ENCODE measurements at regions of chrX and their contacts with region 1.

Region 1: GRCh38 chrX:27599928-27600327 is 9.8 kb downstream of the DCAF8L2 start:
- DNase-seq: no peak
- H3K4me3 Mint-ChIP-seq: peak overlapping the region; percentile 36
- H3K27ac Mint-ChIP-seq: peak overlapping the region; percentile 98
- H3K4me1 Mint-ChIP-seq: peaks cover 28% of the 10 kb centered on the region
- H3K27me3 Mint-ChIP-seq: no peaks in the 10 kb centered on the region
- CTCF ChIP-seq: no peak

Region 2: DNA sequence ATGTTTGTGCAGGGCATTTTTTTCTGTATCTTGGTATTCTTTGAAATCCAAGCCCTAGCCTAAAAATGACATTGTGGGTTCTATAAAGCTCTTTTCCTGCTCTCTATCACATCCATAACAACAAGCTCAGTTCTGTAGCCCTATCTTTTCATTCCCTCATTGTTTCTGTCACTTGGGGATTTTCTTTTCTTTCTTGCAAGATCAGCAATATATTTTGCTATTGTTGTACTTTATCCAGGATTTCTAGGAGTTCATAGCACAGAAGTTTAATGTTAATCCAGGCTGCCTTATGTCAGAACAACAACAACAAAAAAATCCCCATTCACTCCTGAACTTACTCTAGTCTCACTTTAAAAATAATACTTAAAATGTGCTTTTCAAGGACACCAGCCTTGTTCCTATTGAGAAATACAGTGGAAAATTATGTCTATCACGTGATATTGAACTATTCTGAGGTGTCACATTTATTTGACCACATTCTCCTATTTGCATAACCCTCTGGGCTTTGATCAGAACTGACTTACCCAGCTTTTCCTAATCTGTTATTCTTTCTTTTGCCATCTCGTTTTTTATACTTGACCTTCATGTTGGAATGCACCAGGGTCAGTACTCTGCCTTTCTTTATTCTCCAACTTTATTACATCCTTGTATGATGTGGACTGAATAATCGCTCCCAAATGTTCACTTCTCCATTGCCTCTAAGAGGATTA is 1271.2 kb before region 1 on chrX:
- CTCF ChIA-PET with region 1: no interaction called
- intact Hi-C with region 1: no loop called
- DNase-seq: no peak
- H3K4me3 Mint-ChIP-seq: no peak overlapping the region
- H3K27ac Mint-ChIP-seq: no peak overlapping the region
- H3K4me1 Mint-ChIP-seq: no peaks in the 10 kb centered on the region
- H3K27me3 Mint-ChIP-seq: no peaks in the 10 kb centered on the region
- CTCF ChIP-seq: no peak

Region 3: DNA sequence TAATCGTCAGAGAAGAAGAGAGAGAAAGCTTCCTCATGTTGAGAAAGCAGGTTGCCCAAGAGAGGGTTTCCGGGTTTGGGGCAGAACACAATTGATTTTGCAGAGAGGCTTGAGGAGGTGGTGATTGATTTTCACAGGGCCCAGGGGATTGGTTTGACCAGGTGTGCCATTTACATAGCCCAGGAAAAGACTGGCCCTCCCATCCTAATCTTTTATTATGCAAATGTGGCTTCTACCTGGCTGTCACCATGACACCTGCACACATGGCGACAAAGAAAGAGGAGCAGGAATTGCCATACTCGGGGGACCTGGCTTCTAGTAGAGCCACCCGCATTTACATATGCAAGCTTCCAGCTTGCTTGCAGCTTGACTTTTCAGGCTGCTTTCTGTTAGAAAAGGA is 542.0 kb before region 1 on chrX:
- CTCF ChIA-PET with region 1: no interaction called
- intact Hi-C with region 1: no loop called
- DNase-seq: no peak
- H3K4me3 Mint-ChIP-seq: no peak overlapping the region
- H3K27ac Mint-ChIP-seq: no peak overlapping the region
- H3K4me1 Mint-ChIP-seq: no peaks in the 10 kb centered on the region
- H3K27me3 Mint-ChIP-seq: no peaks in the 10 kb centered on the region
- CTCF ChIP-seq: no peak

Region 4: GRCh38 chrX:27445438-27445837 is 154.5 kb before region 1 on chrX:
- CTCF ChIA-PET with region 1: no interaction called
- intact Hi-C with region 1: loop called (anchors 5 kb)
- DNase-seq: peak; percentile 53
- H3K4me3 Mint-ChIP-seq: peak overlapping the region; percentile 50
- H3K27ac Mint-ChIP-seq: peak overlapping the region; percentile 93
- H3K4me1 Mint-ChIP-seq: peaks cover 17% of the 10 kb centered on the region
- H3K27me3 Mint-ChIP-seq: no peaks in the 10 kb centered on the region
- CTCF ChIP-seq: no peak

Region 5: DNA sequence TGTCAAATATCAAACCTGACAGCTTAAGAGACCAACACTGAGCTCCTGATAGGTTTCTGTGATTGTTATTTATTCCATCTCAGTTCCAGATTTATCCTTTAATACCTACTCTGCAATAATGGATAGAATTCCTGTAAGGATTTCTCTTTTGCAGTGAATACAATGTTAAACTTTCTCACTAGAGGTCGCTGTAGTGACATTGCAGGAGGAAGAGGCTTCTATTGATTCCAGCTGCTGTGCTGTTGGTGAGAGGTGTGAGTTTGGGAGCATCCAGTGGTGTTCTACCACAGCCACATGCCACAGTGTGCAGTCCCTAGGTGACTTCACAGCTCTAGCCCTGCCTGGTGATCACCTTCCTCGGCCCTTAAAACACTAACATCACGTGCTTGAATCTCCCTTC is 44.4 kb before region 1 on chrX:
- CTCF ChIA-PET with region 1: no interaction called
- intact Hi-C with region 1: loop called (anchors 5 kb)
- DNase-seq: peak; percentile 6
- H3K4me3 Mint-ChIP-seq: no peak overlapping the region
- H3K27ac Mint-ChIP-seq: no peak overlapping the region
- H3K4me1 Mint-ChIP-seq: no peaks in the 10 kb centered on the region
- H3K27me3 Mint-ChIP-seq: no peaks in the 10 kb centered on the region
- CTCF ChIP-seq: peak; percentile 38

Region 6: GRCh38 chrX:27583976-27584375 is 16.0 kb before region 1 on chrX:
- CTCF ChIA-PET with region 1: no interaction called
- intact Hi-C with region 1: loop called (anchors 2 kb)
- DNase-seq: peak; percentile 9
- H3K4me3 Mint-ChIP-seq: no peak overlapping the region
- H3K27ac Mint-ChIP-seq: peak overlapping the region; percentile 48
- H3K4me1 Mint-ChIP-seq: peaks cover 41% of the 10 kb centered on the region
- H3K27me3 Mint-ChIP-seq: no peaks in the 10 kb centered on the region
- CTCF ChIP-seq: no peak

Region 7: GRCh38 chrX:27619975-27620374 is 20.0 kb after region 1 on chrX:
- CTCF ChIA-PET with region 1: interaction called, 3 read pairs
- intact Hi-C with region 1: loop called (anchors 2 kb)
- DNase-seq: peak; percentile 6
- H3K4me3 Mint-ChIP-seq: no peak overlapping the region
- H3K27ac Mint-ChIP-seq: no peak overlapping the region
- H3K4me1 Mint-ChIP-seq: peaks cover 8% of the 10 kb centered on the region
- H3K27me3 Mint-ChIP-seq: no peaks in the 10 kb centered on the region
- CTCF ChIP-seq: peak; percentile 26

Region 8: GRCh38 chrX:27679281-27679680 is 79.4 kb after region 1 on chrX:
- CTCF ChIA-PET with region 1: no interaction called
- intact Hi-C with region 1: loop called (anchors 5 kb)
- DNase-seq: no peak
- H3K4me3 Mint-ChIP-seq: no peak overlapping the region
- H3K27ac Mint-ChIP-seq: no peak overlapping the region
- H3K4me1 Mint-ChIP-seq: no peaks in the 10 kb centered on the region
- H3K27me3 Mint-ChIP-seq: no peaks in the 10 kb centered on the region
- CTCF ChIP-seq: no peak